Activated T-helper 1 cell treated with anti-CD3 and anti-CD28 coated beads, Interleukin-12 subunit alpha, Interleukin-12 subunit beta, Interleukin-2, Interleukin-4 antibody, amounts not matched to agents 30 ng/mL and 10 ng/mL and 1 ng/mL, durations not matched to agents 14 hours and 24 hours and 36 hours (primary cell): ENCODE measurements at regions of chr10 and their contacts with region 1.

Region 1: GRCh38 chr10:99711129-99711719 is 20.7 kb downstream of the COX15 start:
- DNase-seq: peak; percentile 10
- H3K4me3 Mint-ChIP-seq: no peak overlapping the region
- H3K27ac Mint-ChIP-seq: no peak overlapping the region
- H3K4me1 Mint-ChIP-seq: peaks cover 8% of the 10 kb centered on the region
- H3K27me3 Mint-ChIP-seq: no peaks in the 10 kb centered on the region

Region 2: DNA sequence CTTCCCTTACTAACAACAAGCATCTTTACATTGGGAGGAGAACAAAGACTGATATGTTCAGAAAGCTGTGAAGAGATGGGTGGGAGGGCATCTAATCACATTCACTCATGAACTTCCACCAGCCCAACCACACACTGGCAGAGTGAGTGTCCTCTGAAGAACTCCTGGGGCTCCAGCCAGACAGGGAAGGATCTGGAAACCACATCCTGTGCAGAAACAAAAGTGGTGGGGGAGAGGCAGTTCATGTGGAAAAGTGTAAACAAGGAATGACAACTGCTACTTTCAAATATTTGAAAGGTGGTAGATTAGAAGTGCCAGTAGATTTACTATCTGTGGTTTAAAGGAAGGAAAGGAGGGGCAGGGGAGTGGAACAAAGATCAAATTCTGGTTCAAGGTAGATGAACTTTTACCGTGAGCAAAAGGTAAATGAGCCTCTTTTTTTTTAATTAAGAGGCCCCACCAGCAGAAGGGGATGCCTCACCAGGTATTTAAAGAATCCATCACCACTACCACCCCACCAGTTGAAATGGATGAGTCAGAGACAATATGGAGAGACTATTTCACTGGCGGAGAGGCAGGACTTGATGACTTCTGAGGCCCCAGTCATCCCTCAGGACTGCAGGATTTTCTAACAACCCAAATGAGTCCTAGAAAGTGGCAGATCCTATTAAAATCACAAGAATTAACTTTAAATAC is 315.3 kb before region 1 on chr10:
- intact Hi-C with region 1: loop called (anchors 2 kb)
- DNase-seq: no peak
- H3K4me3 Mint-ChIP-seq: no peak overlapping the region
- H3K27ac Mint-ChIP-seq: peak overlapping the region; percentile 6
- H3K4me1 Mint-ChIP-seq: peaks cover 7% of the 10 kb centered on the region
- H3K27me3 Mint-ChIP-seq: peaks cover 4% of the 10 kb centered on the region

Region 3: GRCh38 chr10:99435986-99436638 is 275.1 kb before region 1 on chr10:
- intact Hi-C with region 1: loop called (anchors 1 kb)
- DNase-seq: no peak
- H3K4me3 Mint-ChIP-seq: no peak overlapping the region
- H3K27ac Mint-ChIP-seq: no peak overlapping the region
- H3K4me1 Mint-ChIP-seq: peaks cover 13% of the 10 kb centered on the region
- H3K27me3 Mint-ChIP-seq: no peaks in the 10 kb centered on the region

Region 4: DNA sequence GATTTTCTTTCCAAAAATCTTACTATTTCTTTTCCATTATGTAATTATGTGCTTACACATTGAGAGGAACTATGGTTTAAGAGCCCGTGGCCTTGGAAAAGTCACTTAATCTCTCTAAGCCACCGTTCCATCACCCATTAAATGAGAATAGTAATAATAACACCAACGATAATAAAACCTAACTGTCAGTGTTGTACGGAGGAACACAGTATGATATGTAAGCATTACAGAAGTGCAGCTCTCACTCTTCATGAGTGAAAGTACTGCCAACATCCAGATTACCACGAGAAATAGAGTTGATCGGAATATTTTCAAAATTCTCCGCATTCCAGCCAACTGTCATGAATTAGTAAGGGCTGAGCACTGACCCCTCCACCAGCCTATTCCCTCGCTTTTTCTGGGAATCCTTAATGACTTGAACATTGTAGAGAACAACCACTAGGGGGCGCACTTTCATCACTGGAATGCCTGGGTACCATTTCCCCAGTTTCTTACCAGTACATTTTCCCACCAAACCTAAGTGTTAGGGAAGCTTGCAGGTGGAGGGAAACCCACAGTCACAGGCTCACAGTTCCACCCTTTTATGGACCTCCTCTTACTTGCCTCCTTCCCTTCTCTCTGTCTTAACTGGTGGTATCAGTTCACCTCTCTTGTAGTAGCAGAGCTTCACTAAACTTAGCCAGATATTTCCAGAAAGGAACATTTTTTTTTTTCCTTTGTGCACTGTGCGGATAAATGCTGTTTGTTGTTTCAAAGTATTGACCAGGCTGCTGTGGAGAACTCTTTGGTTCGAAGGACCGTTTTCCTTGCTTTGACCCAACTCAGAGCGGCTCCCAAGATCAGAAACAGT is 150.7 kb before region 1 on chr10:
- intact Hi-C with region 1: loop called (anchors 1 kb)
- DNase-seq: peak; percentile 17
- H3K4me3 Mint-ChIP-seq: no peak overlapping the region
- H3K27ac Mint-ChIP-seq: no peak overlapping the region
- H3K4me1 Mint-ChIP-seq: peaks cover 9% of the 10 kb centered on the region
- H3K27me3 Mint-ChIP-seq: peaks cover 14% of the 10 kb centered on the region

Region 5: GRCh38 chr10:99612167-99612831 is 98.9 kb before region 1 on chr10:
- intact Hi-C with region 1: loop called (anchors 2 kb)
- DNase-seq: no peak
- H3K4me3 Mint-ChIP-seq: no peak overlapping the region
- H3K27ac Mint-ChIP-seq: peak overlapping the region; percentile 41
- H3K4me1 Mint-ChIP-seq: peaks cover 33% of the 10 kb centered on the region
- H3K27me3 Mint-ChIP-seq: no peaks in the 10 kb centered on the region